A673 (cell line): ENCODE measurements at regions of chr4 and their contacts with region 1.

Region 1: DNA sequence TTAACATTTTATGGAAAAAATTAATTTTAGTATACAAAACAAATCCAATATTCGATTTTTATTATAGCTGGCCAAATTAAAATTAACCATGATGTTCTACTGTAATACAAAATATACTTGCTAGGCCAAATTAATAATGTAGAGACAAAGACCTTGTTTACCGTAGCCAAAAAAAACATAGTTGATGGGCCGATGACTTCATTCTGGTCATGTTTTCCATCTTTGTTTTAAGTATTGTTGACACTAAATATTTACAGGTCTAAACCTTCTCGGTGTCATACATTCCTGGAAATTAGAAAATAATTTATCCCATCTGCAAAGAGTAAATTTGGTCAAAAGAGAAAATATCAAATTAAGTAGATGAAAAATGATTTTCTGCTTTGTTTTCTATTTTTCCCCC is 698.5 kb downstream of the GRID2 start:
- DNase-seq: no peak
- H3K4me3 ChIP-seq: no peak overlapping the region
- H3K27ac ChIP-seq: no peak overlapping the region
- H3K4me1 ChIP-seq: no peaks in the 10 kb centered on the region
- H3K27me3 ChIP-seq: no peaks in the 10 kb centered on the region
- CTCF ChIP-seq: no peak

Region 2: DNA sequence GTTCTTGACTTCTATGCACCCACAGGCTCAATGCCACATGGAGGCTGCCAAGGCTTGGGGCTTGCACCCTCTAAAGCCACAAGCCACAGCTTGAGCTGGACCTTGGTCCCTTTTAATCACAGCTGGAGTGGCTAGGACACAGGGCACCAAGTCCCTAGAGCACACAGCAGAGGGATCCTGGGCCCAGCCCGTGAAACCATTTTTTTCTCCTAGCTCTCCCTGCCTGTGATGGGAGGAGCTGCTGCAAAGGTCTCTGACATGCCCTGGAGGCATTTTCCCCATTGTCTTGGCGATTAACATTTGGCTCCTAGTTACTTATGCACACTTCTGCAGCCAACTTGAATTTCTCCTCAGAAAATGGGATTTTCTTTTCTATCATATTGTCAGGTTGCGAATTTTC is 287.6 kb before region 1 on chr4:
- CTCF ChIA-PET with region 1: no interaction called
- POLR2A ChIA-PET with region 1: no interaction called
- intact Hi-C with region 1: no loop called
- DNase-seq: no peak
- H3K4me3 ChIP-seq: no peak overlapping the region
- H3K27ac ChIP-seq: no peak overlapping the region
- H3K4me1 ChIP-seq: no peaks in the 10 kb centered on the region
- H3K27me3 ChIP-seq: no peaks in the 10 kb centered on the region
- CTCF ChIP-seq: no peak

Region 3: DNA sequence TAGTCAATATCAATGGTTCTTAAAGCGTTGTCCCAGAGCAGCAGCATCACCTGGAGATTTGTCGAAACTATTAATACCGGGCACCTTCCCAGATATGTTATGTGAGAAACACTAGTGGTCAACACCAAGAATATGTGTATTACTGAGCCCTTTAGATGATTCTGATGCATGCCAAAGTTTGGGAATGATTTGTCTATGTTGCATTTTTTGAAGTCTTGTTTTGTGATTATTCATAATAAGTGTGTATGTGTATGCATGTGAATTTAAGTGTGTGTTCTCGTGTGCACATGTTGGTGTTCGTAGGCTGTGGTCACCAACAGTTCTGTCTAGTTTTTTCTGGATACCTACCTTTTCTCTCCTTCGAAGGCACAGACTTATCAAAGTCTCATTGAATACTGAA is 50.9 kb after region 1 on chr4:
- CTCF ChIA-PET with region 1: no interaction called
- POLR2A ChIA-PET with region 1: no interaction called
- intact Hi-C with region 1: loop called (anchors 5 kb)
- DNase-seq: no peak
- H3K4me3 ChIP-seq: no peak overlapping the region
- H3K27ac ChIP-seq: no peak overlapping the region
- H3K4me1 ChIP-seq: no peaks in the 10 kb centered on the region
- H3K27me3 ChIP-seq: no peaks in the 10 kb centered on the region
- CTCF ChIP-seq: no peak